Endothelial cell of umbilical vein (primary cell): ENCODE measurements at regions of chr3 and their contacts with region 1.

Region 1: GRCh38 chr3:188507244-188507720 is 353.3 kb downstream of the LPP start:
- DNase-seq: peak; percentile 83
- H3K4me3 ChIP-seq: no peak overlapping the region
- H3K27ac ChIP-seq: peak overlapping the region; percentile 33
- H3K4me1 ChIP-seq: peaks cover 25% of the 10 kb centered on the region
- H3K27me3 ChIP-seq: no peaks in the 10 kb centered on the region
- CTCF ChIP-seq: no peak
- POLR2A ChIP-seq: no peak

Region 2: GRCh38 chr3:188294823-188295487 is 212.3 kb before region 1 on chr3:
- CTCF ChIA-PET with region 1: no interaction called
- POLR2A ChIA-PET with region 1: no interaction called
- dilution Hi-C with region 1: no loop called
- intact Hi-C with region 1: loop called (anchors 1 kb)
- DNase-seq: peak; percentile 95
- H3K4me3 ChIP-seq: no peak overlapping the region
- H3K27ac ChIP-seq: peak overlapping the region; percentile 63
- H3K4me1 ChIP-seq: peaks cover 49% of the 10 kb centered on the region
- H3K27me3 ChIP-seq: no peaks in the 10 kb centered on the region
- CTCF ChIP-seq: no peak
- POLR2A ChIP-seq: no peak

Region 3: DNA sequence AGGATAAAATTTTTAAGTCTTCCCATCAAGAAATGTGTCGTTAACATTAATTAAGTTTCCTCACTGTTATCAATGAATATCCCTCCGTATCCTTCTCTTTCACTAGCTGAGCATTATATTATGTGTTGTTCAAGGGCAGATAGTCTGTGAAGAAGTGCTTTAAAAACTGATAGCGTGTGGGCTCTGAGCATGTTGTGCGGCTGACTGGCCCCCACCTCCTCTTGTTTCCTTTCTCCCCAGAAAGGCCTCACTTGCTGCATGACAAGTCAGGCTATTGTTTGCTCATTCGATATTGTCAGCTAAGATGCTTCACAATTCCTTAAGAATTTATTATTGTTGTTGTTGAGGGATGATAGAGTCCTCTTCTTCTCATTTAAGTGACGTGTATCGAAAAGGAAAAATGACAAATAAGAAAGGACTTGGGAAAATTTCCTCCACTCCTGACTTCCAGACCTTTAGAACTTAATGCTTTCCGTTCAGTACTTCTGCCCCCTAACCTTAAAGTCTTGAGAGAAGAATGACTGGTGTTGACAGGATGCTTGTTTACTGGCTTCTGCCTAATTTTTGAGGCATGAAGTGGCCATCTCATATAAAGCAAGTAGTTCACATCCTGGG is 55.0 kb before region 1 on chr3:
- CTCF ChIA-PET with region 1: no interaction called
- POLR2A ChIA-PET with region 1: no interaction called
- dilution Hi-C with region 1: no loop called
- intact Hi-C with region 1: loop called (anchors 5 kb)
- DNase-seq: peak; percentile 61
- H3K4me3 ChIP-seq: no peak overlapping the region
- H3K27ac ChIP-seq: peak overlapping the region; percentile 46
- H3K4me1 ChIP-seq: peaks cover 30% of the 10 kb centered on the region
- H3K27me3 ChIP-seq: no peaks in the 10 kb centered on the region
- CTCF ChIP-seq: no peak
- POLR2A ChIP-seq: no peak

Region 4: GRCh38 chr3:188531210-188531609 is 23.9 kb after region 1 on chr3:
- CTCF ChIA-PET with region 1: interaction called, 6 read pairs
- POLR2A ChIA-PET with region 1: no interaction called
- dilution Hi-C with region 1: no loop called
- intact Hi-C with region 1: loop called (anchors 1 kb)
- DNase-seq: peak; percentile 87
- H3K4me3 ChIP-seq: no peak overlapping the region
- H3K27ac ChIP-seq: peak overlapping the region; percentile 85
- H3K4me1 ChIP-seq: peaks cover 37% of the 10 kb centered on the region
- H3K27me3 ChIP-seq: no peaks in the 10 kb centered on the region
- CTCF ChIP-seq: no peak
- POLR2A ChIP-seq: no peak

Region 5: DNA sequence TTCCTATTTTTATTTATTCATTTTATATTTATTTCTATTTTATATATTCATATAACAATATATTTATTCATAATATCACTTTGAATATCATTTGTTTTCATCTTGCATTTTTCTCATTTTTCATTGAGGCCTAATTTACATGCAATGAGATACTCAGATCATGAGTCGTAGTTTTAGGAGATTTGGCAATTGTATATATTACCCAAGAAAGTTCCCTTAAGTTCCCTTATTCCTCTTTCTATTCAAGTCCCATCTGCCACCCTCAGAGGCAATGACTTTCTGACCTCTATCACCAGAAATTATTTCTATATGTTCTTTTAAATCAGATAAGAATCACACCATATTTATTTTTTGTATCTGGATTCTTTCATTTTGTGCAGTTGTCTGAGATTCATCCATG is 335.4 kb after region 1 on chr3:
- CTCF ChIA-PET with region 1: no interaction called
- POLR2A ChIA-PET with region 1: no interaction called
- dilution Hi-C with region 1: no loop called
- intact Hi-C with region 1: no loop called
- DNase-seq: no peak
- H3K4me3 ChIP-seq: no peak overlapping the region
- H3K27ac ChIP-seq: no peak overlapping the region
- H3K4me1 ChIP-seq: no peaks in the 10 kb centered on the region
- H3K27me3 ChIP-seq: no peaks in the 10 kb centered on the region
- CTCF ChIP-seq: no peak
- POLR2A ChIP-seq: no peak

Region 6: DNA sequence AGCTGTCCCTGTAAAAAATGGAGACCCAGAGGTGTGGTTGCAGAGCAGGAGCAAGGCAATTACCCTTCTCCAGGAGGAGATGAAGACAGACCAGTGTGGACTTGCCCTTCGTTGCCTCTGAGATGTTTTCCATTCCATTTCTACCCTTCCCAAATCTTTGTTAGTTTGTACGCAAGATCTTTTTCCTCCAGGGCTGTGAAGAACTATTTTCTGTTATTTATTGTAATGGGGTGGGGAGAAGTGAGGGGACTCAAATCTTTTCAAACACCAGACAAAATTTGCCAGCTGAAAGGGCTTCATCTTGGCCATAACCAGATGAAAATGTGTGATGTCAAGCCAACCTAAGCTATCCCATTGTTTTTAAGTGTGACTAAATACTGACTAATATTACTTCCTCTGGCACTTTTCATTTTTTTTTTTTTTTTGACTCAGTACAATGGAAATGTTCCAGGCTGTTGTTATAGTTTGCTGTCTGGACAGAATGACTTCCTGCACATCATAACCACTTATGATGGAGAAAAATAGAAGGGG is 393.2 kb after region 1 on chr3:
- CTCF ChIA-PET with region 1: no interaction called
- POLR2A ChIA-PET with region 1: no interaction called
- dilution Hi-C with region 1: no loop called
- intact Hi-C with region 1: loop called (anchors 5 kb)
- DNase-seq: peak; percentile 94
- H3K4me3 ChIP-seq: peak overlapping the region in 1 of 3 experiments; percentile 35
- H3K27ac ChIP-seq: peak overlapping the region; percentile 100
- H3K4me1 ChIP-seq: peaks cover 37% of the 10 kb centered on the region
- H3K27me3 ChIP-seq: no peaks in the 10 kb centered on the region
- CTCF ChIP-seq: no peak
- POLR2A ChIP-seq: no peak